ENCODE measurements at regions of chr2 and their contacts with region 1.

Region 1: GRCh38 chr2:45494269-45494977 is 116.6 kb downstream of the SRBD1 start:
- DNase-seq: no peak
- H3K4me3 ChIP-seq: no peak overlapping the region
- H3K27ac ChIP-seq: no peak overlapping the region
- H3K4me1 ChIP-seq: peaks cover 0 to 3% (median 0%) of the 10 kb centered on the region in 4 experiments; a peak in 2 of 7 replicates
- H3K27me3 ChIP-seq: no peaks in the 10 kb centered on the region
- CTCF ChIP-seq: peak in 2 of 3 experiments; percentile 46 to 68; a peak in 2 of 4 replicates
- EP300 ChIP-seq: no peak
- POLR2A ChIP-seq: no peak
- RAD21 ChIP-seq: peak; percentile 86 to 91

Region 2: GRCh38 chr2:44981136-44982108 is 513.0 kb before region 1 on chr2:
- CTCF ChIA-PET with region 1: interaction called, 62 read pairs
- POLR2A ChIA-PET with region 1: no interaction called
- DNase-seq: peak in 1 of 2 experiments; percentile 93
- H3K4me3 ChIP-seq: no peak overlapping the region
- H3K27ac ChIP-seq: no peak overlapping the region
- H3K4me1 ChIP-seq: peaks cover 0 to 4% (median 0%) of the 10 kb centered on the region in 4 experiments; a peak in 2 of 7 replicates
- H3K27me3 ChIP-seq: no peaks in the 10 kb centered on the region
- CTCF ChIP-seq: peak; percentile 88 to 95 (median 94)
- EP300 ChIP-seq: no peak
- POLR2A ChIP-seq: no peak
- RAD21 ChIP-seq: peak; percentile 98

Region 3: GRCh38 chr2:45000921-45001868 is 493.2 kb before region 1 on chr2:
- CTCF ChIA-PET with region 1: interaction called, 29 read pairs
- POLR2A ChIA-PET with region 1: no interaction called
- DNase-seq: peak in 1 of 2 experiments; percentile 83
- H3K4me3 ChIP-seq: peak overlapping the region; percentile 18 to 57 (median 44); a peak in 7 of 8 replicates
- H3K27ac ChIP-seq: no peak overlapping the region
- H3K4me1 ChIP-seq: peaks cover 0 to 21% (median 18%) of the 10 kb centered on the region in 4 experiments; a peak in 5 of 7 replicates
- H3K27me3 ChIP-seq: peaks cover 72 to 89% (median 85%) of the 10 kb centered on the region in 4 experiments
- CTCF ChIP-seq: no peak
- EP300 ChIP-seq: no peak
- POLR2A ChIP-seq: no peak
- RAD21 ChIP-seq: no peak

Region 4: GRCh38 chr2:45009303-45009927 is 485.0 kb before region 1 on chr2 and contains the start of gene SIX2:
- CTCF ChIA-PET with region 1: interaction called, 13 read pairs
- POLR2A ChIA-PET with region 1: no interaction called
- DNase-seq: peak; percentile 92 to 93
- H3K4me3 ChIP-seq: peak within 1 kb of the TSS; percentile 27 to 64 (median 36)
- H3K27ac ChIP-seq: no peak within 1 kb of the TSS
- H3K4me1 ChIP-seq: peaks cover 0 to 33% (median 16%) of the 10 kb centered on the region in 4 experiments; a peak in 5 of 7 replicates
- H3K27me3 ChIP-seq: peaks cover 75 to 90% (median 86%) of the 10 kb centered on the region in 4 experiments
- CTCF ChIP-seq: no peak
- EP300 ChIP-seq: peak in 1 of 2 experiments; percentile 54; a peak in 1 of 3 replicates
- POLR2A ChIP-seq: no peak
- RAD21 ChIP-seq: no peak; a peak in 1 of 4 replicates
- total RNA-seq, gene SIX2: 0.84 and 1.0 TPM in 2 replicates

Region 5: DNA sequence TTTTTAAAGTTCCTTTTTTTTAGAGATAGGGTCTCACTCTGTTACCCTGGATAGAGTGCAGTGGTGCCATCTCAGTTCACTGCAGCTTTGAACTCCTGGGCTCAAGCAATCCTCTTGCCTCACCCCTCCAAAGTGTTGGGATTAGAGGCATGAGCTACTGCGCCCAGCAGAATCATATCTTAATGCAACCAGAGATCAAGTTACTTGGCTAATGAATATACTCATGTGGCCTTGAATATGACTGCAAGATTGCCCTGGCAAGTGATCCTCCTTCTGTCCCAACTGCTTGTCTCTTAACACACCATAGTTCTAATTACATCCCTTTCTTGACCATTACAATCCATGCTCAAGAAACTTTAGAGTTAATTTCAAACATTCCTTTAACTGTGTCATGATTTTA is 16.9 kb before region 1 on chr2:
- CTCF ChIA-PET with region 1: no interaction called
- POLR2A ChIA-PET with region 1: no interaction called
- DNase-seq: no peak
- H3K4me3 ChIP-seq: no peak overlapping the region
- H3K27ac ChIP-seq: no peak overlapping the region
- H3K4me1 ChIP-seq: no peaks in the 10 kb centered on the region
- H3K27me3 ChIP-seq: no peaks in the 10 kb centered on the region
- CTCF ChIP-seq: no peak
- EP300 ChIP-seq: no peak
- POLR2A ChIP-seq: no peak
- RAD21 ChIP-seq: no peak

Region 6: GRCh38 chr2:45510701-45511420 is 16.4 kb after region 1 on chr2:
- CTCF ChIA-PET with region 1: interaction called, 10 read pairs
- POLR2A ChIA-PET with region 1: no interaction called
- DNase-seq: no peak
- H3K4me3 ChIP-seq: no peak overlapping the region
- H3K27ac ChIP-seq: no peak overlapping the region
- H3K4me1 ChIP-seq: peaks cover 0 to 6% (median 5%) of the 10 kb centered on the region in 4 experiments; a peak in 4 of 7 replicates
- H3K27me3 ChIP-seq: no peaks in the 10 kb centered on the region
- CTCF ChIP-seq: no peak
- EP300 ChIP-seq: no peak
- POLR2A ChIP-seq: no peak
- RAD21 ChIP-seq: no peak

Region 7: GRCh38 chr2:45578056-45578809 is 83.8 kb after region 1 on chr2:
- CTCF ChIA-PET with region 1: interaction called, 11 read pairs
- POLR2A ChIA-PET with region 1: no interaction called
- DNase-seq: no peak
- H3K4me3 ChIP-seq: no peak overlapping the region
- H3K27ac ChIP-seq: no peak overlapping the region
- H3K4me1 ChIP-seq: 0 out of 7 replicates have a peak, but pooled peaks cover 0 to 2% (median 0%) of the 10 kb centered on the region in 4 experiments
- H3K27me3 ChIP-seq: peaks cover 0 to 1% (median 0%) of the 10 kb centered on the region in 4 experiments; a peak in 1 of 7 replicates
- CTCF ChIP-seq: peak in 2 of 3 experiments; percentile 28 to 42; a peak in 2 of 4 replicates
- EP300 ChIP-seq: no peak
- POLR2A ChIP-seq: no peak
- RAD21 ChIP-seq: peak; percentile 62 to 66

Measured in H1 (cell line).